A673 (cell line): ENCODE measurements at regions of chr6 and their contacts with region 1.

Region 1: DNA sequence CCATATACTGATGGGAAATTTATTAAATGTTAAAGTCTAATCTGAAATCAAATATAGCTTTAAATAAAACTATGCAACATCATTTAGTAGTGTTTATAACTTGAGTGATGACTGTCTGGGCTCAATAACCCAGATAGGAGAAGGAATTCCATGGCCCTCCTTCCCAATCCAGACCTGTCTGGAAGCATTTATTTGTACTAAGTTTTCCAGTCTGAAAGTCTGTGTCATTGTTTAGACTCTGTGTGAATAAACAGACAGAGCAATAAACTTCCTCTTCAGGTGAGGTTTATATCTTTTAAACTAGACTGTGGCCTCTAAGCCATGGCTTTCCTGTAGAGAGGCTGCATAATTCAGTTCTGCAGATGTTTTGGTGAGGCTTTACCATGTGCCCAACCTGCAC is 176.4 kb downstream of the SOX4 start:
- DNase-seq: no peak
- H3K4me3 ChIP-seq: no peak overlapping the region
- H3K27ac ChIP-seq: no peak overlapping the region
- H3K4me1 ChIP-seq: peaks cover 53% of the 10 kb centered on the region
- H3K27me3 ChIP-seq: no peaks in the 10 kb centered on the region
- CTCF ChIP-seq: no peak

Region 2: GRCh38 chr6:20853828-20854227 is 916.1 kb before region 1 on chr6:
- CTCF ChIA-PET with region 1: no interaction called
- POLR2A ChIA-PET with region 1: interaction called, 17 read pairs
- intact Hi-C with region 1: no loop called
- DNase-seq: no peak
- H3K4me3 ChIP-seq: no peak overlapping the region
- H3K27ac ChIP-seq: no peak overlapping the region
- H3K4me1 ChIP-seq: no peaks in the 10 kb centered on the region
- H3K27me3 ChIP-seq: no peaks in the 10 kb centered on the region
- CTCF ChIP-seq: no peak

Region 3: GRCh38 chr6:21022343-21023107 is 747.4 kb before region 1 on chr6:
- CTCF ChIA-PET with region 1: no interaction called
- POLR2A ChIA-PET with region 1: no interaction called
- intact Hi-C with region 1: no loop called
- DNase-seq: no peak
- H3K4me3 ChIP-seq: no peak overlapping the region
- H3K27ac ChIP-seq: no peak overlapping the region
- H3K4me1 ChIP-seq: no peaks in the 10 kb centered on the region
- H3K27me3 ChIP-seq: no peaks in the 10 kb centered on the region
- CTCF ChIP-seq: no peak

Region 4: DNA sequence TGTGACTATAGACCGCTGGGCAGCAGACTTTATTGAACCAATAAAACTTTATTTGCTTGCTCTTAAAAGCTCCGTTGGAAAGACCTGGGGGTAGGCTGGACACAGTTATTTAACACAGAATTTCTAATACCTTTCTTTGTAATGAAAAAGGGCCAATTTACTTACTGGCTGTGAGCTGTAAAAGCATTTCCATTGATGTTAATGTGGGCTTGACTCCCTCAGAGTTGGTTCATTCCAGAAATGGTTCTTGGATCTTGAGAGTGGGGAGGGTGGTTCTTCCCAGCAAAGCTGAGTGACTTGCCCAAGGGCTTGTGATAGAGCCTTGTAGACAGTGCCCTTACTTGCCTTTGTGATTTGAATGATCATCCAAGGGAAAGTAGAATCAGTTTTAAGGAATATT is 75.8 kb before region 1 on chr6:
- CTCF ChIA-PET with region 1: no interaction called
- POLR2A ChIA-PET with region 1: no interaction called
- intact Hi-C with region 1: loop called (anchors 2 kb)
- DNase-seq: no peak
- H3K4me3 ChIP-seq: no peak overlapping the region
- H3K27ac ChIP-seq: no peak overlapping the region
- H3K4me1 ChIP-seq: no peaks in the 10 kb centered on the region
- H3K27me3 ChIP-seq: no peaks in the 10 kb centered on the region
- CTCF ChIP-seq: no peak

Region 5: DNA sequence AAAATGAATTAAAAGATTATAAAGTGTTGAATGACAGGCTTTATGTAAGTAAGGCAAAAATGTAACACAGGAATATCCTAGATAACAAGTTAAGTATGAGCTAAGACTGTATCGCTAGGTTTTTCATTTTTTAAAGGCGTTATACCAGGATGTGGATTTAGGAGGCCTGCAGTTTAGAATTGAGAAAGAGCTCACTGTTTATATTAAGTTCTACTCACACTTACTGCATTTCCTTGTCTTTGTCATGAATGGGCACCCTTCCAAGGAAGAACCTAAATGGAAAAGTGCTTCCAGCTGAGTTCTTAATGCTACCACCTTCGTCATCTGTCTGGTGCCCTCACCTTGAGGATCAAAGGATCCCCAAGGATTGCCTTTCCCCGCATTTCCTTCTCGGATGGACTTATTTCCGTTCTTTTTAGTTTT is 27.7 kb before region 1 on chr6:
- CTCF ChIA-PET with region 1: no interaction called
- POLR2A ChIA-PET with region 1: no interaction called
- intact Hi-C with region 1: loop called (anchors 2 kb)
- DNase-seq: peak; percentile 94
- H3K4me3 ChIP-seq: no peak overlapping the region
- H3K27ac ChIP-seq: peak overlapping the region; percentile 6
- H3K4me1 ChIP-seq: peaks cover 32% of the 10 kb centered on the region
- H3K27me3 ChIP-seq: peaks cover 28% of the 10 kb centered on the region
- CTCF ChIP-seq: no peak